ENCODE measurements at regions of chr19 and their contacts with region 1.

Region 1: DNA sequence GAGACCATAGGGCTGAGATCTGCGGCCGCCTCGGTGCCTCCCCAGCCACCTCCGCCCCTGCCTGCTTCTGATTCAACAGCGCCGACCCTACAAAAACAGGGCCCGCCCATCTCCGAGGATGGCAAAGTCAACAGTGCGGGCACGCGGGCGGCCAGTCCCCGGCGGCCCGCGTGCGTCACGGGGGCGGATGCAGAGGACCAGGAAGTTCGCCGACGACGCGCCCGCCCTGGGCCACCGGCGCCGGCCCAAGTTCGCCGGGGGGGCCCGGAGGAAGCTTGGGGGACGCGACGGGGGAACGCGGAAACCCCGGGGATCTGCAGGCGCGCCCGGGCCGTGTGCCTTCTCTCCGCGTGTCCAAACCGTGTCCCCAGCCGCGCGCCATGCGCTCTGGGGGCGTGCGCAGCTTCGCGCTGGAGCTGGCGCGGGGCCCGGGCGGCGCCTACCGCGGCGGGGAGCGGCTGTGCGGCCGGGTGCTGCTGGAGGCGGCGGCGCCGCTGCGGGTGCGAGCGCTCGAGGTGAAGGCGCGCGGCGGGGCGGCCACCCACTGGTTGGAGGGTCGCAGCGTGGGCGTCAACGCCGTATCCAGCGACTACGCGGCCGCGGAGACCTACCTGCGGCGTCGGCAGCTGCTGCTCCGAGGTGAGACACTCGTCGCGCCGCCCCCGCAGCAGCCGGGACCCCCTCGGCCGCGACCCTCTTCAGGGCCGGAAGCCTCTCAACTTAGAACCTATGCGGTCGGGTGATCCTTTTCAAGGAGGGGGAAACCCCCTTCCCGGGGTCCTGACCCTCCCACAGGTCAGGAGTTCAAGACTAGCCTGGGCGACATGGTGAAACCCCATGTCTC is 6.8 kb upstream of the ARRDC2 start:
- DNase-seq: peak; percentile 95
- H3K4me3 Mint-ChIP-seq: peak overlapping the region; percentile 87
- H3K27ac Mint-ChIP-seq: peak overlapping the region; percentile 97
- H3K4me1 Mint-ChIP-seq: peaks cover 19% of the 10 kb centered on the region
- H3K27me3 Mint-ChIP-seq: no peaks in the 10 kb centered on the region

Region 2: DNA sequence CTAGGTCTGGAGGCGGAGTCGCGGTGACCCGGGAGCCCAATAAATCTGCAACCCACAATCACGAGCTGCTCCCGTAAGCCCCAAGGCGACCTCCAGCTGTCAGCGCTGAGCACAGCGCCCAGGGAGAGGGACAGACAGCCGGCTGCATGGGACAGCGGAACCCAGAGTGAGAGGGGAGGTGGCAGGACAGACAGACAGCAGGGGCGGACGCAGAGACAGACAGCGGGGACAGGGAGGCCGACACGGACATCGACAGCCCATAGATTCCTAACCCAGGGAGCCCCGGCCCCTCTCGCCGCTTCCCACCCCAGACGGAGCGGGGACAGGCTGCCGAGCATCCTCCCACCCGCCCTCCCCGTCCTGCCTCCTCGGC is 129.3 kb before region 1 on chr19 and contains the start of gene SLC5A5:
- CTCF ChIA-PET with region 1: interaction called, 5 read pairs
- intact Hi-C with region 1: loop called (anchors 1 kb)
- DNase-seq: peak; percentile 49
- H3K4me3 Mint-ChIP-seq: peak within 1 kb of the TSS; percentile 81
- H3K27ac Mint-ChIP-seq: peak within 1 kb of the TSS; percentile 46
- H3K4me1 Mint-ChIP-seq: peaks cover 15% of the 10 kb centered on the region
- H3K27me3 Mint-ChIP-seq: no peaks in the 10 kb centered on the region
- total RNA-seq, gene SLC5A5: 1.1 to 1.2 TPM

Region 3: DNA sequence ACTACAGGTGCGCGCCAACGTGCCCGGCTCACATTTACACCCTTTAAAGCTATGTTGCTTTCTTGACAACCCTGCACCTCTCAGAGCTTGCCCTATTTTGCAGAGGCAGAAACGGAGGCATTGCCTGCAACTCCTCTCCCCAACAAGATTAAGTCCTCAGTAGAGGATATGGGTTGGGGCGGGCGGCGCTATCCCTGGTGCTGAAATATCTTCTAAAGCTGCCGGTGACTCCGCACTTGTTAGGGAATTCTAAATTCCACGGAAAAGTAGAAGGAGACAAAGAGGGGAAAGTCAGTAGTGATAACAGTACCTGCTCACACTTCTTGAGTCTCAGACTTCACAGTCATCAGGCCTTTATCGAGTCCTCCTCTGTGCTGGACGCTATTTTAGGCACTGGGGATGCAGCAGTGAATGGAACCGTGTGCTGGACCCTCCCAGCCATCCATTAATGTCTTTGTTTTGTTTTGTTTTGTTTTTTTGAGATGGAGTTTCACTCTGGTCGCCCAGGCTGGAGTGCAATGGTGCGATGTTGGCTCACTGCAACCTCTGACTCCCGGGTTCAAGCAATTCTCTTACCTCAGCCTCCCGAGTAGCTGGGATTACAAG is 111.4 kb before region 1 on chr19:
- CTCF ChIA-PET with region 1: no interaction called
- intact Hi-C with region 1: no loop called
- DNase-seq: peak; percentile 35
- H3K4me3 Mint-ChIP-seq: no peak overlapping the region
- H3K27ac Mint-ChIP-seq: no peak overlapping the region
- H3K4me1 Mint-ChIP-seq: no peaks in the 10 kb centered on the region
- H3K27me3 Mint-ChIP-seq: no peaks in the 10 kb centered on the region

Region 4: GRCh38 chr19:17938092-17938845 is 62.9 kb before region 1 on chr19:
- CTCF ChIA-PET with region 1: interaction called, 186 read pairs
- intact Hi-C with region 1: loop called (anchors 1 kb)
- DNase-seq: peak; percentile 92
- H3K4me3 Mint-ChIP-seq: no peak overlapping the region
- H3K27ac Mint-ChIP-seq: no peak overlapping the region
- H3K4me1 Mint-ChIP-seq: peaks cover 15% of the 10 kb centered on the region
- H3K27me3 Mint-ChIP-seq: no peaks in the 10 kb centered on the region

Region 5: DNA sequence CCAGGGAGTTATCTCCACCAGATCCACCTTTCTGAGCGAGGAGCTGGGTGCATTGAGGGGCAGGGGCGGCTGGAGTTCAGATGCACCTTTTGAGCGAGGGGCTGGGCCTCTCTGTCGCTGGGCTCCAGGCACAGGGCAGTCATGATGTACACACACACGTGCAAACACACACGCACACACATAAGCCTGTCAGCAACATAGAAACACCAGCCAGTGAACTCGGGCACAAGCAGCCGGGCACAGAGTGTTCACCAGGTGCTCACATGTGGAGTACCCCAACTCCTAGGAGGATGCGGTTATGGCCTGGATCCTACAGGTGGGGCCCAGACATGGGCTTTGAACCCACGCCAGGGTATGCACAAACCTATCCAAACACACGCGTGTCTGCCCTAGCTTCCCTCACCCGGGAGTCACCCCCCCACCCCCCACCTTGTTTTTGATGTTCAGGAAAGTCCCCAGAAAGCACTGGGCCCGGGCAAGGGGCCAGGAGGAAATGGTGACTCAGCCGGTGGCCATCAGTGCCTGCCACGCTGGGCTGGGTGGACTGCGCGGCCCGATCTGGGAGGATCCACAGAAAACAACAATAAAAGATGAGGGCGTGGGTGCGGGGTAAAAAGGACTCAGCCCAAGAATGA is 20.1 kb after region 1 on chr19:
- CTCF ChIA-PET with region 1: interaction called, 3 read pairs
- intact Hi-C with region 1: loop called (anchors 2 kb)
- DNase-seq: peak; percentile 80
- H3K4me3 Mint-ChIP-seq: peak overlapping the region; percentile 78
- H3K27ac Mint-ChIP-seq: peak overlapping the region; percentile 79
- H3K4me1 Mint-ChIP-seq: peaks cover 64% of the 10 kb centered on the region
- H3K27me3 Mint-ChIP-seq: no peaks in the 10 kb centered on the region

Region 6: DNA sequence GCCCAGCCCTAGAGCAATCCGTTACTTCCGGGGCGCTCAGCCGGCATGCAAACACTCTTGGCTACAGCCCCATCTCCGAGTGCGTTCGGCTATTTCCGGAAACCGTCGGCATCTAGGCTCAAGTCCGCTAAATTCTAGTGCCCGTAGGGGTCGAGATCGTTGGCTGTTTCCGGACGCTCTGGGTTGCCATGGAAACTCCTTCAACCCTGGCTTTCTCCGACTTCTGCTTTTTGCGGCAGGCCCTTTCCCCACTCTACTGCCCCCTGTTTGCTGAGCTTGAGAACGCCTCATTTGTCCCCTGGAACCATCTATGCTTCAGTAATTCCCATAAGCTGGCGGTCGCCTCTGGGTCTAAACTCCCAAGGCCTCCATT is 151.3 kb after region 1 on chr19:
- CTCF ChIA-PET with region 1: no interaction called
- intact Hi-C with region 1: loop called (anchors 2 kb)
- DNase-seq: peak; percentile 100
- H3K4me3 Mint-ChIP-seq: peak overlapping the region; percentile 79
- H3K27ac Mint-ChIP-seq: peak overlapping the region; percentile 93
- H3K4me1 Mint-ChIP-seq: peaks cover 22% of the 10 kb centered on the region
- H3K27me3 Mint-ChIP-seq: no peaks in the 10 kb centered on the region